Activated CD8-positive, alpha-beta T cell treated with anti-CD3 and anti-CD28 coated beads, Interleukin-2, amount 10 ng/mL, durations not matched to agents 7 days and 5 days (primary cell): ENCODE measurements at regions of chr9 and their contacts with region 1.

Region 1: GRCh38 chr9:128026773-128027541 is 40.2 kb downstream of the NAIF1 start:
- DNase-seq: peak; percentile 59
- ATAC-seq: peak; percentile 24
- H3K4me3 Mint-ChIP-seq: peak overlapping the region; percentile 71
- H3K27ac Mint-ChIP-seq: peak overlapping the region; percentile 96
- H3K4me1 Mint-ChIP-seq: peaks cover 93% of the 10 kb centered on the region
- H3K27me3 Mint-ChIP-seq: no peaks in the 10 kb centered on the region

Region 2: GRCh38 chr9:127611899-127612790 is 414.8 kb before region 1 on chr9 and contains the start of gene STXBP1:
- CTCF ChIA-PET with region 1: no interaction called
- POLR2A ChIA-PET with region 1: no interaction called
- DNase-seq: peak; percentile 89
- ATAC-seq: peak; percentile 82
- H3K4me3 Mint-ChIP-seq: peak within 1 kb of the TSS; percentile 84
- H3K27ac Mint-ChIP-seq: peak within 1 kb of the TSS; percentile 64
- H3K4me1 Mint-ChIP-seq: peaks cover 35% of the 10 kb centered on the region
- H3K27me3 Mint-ChIP-seq: peaks cover 34% of the 10 kb centered on the region
- total RNA-seq, gene STXBP1: 24.2 to 25.3 TPM

Region 3: GRCh38 chr9:127955294-127956035 is 71.5 kb before region 1 on chr9:
- CTCF ChIA-PET with region 1: interaction called, 151 read pairs
- POLR2A ChIA-PET with region 1: interaction called, 7 read pairs
- DNase-seq: peak; percentile 83
- ATAC-seq: peak; percentile 96
- H3K4me3 Mint-ChIP-seq: peak overlapping the region; percentile 21
- H3K27ac Mint-ChIP-seq: peak overlapping the region; percentile 70
- H3K4me1 Mint-ChIP-seq: peaks cover 89% of the 10 kb centered on the region
- H3K27me3 Mint-ChIP-seq: no peaks in the 10 kb centered on the region

Region 4: GRCh38 chr9:127970401-127971313 is 56.3 kb before region 1 on chr9:
- CTCF ChIA-PET with region 1: interaction called, 158 read pairs
- POLR2A ChIA-PET with region 1: interaction called, 183 read pairs
- DNase-seq: peak; percentile 86
- ATAC-seq: peak; percentile 74
- H3K4me3 Mint-ChIP-seq: peak overlapping the region; percentile 97
- H3K27ac Mint-ChIP-seq: peak overlapping the region; percentile 99
- H3K4me1 Mint-ChIP-seq: peaks cover 98% of the 10 kb centered on the region
- H3K27me3 Mint-ChIP-seq: no peaks in the 10 kb centered on the region

Region 5: DNA sequence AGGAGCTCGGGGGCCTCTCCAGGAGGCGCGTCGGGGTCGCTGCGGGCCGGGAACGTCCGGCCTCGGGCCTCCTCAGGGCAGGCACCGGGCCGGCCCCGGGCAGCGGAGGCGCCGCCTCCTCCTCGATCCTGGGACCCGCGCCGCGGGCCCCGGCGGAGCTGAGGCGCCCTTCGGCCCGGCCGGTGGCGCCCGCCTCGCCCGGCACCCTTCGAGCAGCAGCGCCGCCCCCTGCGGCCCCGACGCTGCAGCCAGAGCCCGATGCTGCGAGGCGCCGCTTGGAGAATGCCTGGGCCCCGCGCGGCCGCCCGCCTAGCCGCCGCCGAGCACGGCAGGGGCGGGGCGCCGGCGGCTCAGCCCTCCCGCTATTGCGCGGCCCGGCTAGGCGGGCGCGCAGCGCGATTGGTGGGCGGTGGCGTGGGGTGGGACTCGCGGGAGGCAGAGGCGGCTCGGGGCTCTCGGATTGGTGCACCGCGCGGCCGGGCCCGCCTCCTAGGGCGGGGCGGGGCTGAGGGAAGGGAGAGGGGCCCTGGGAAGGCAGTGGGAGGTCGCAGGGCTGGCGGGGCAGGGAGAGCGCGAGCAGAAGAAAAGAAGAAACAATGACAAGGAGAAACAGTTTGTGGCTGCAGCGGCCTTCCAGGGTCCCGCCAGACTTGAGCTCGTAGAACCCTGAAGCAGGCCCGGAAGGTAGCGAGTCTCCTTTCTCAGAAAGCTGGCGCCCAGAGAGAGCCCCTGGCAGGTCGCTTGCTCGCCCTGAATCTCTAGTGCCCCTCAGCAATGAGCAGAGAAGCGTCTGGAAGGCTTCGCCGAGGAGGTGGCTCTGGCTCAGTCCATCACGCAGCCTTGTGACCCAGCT is 46.0 kb before region 1 on chr9 and contains the start of gene EEIG1:
- CTCF ChIA-PET with region 1: interaction called, 158 read pairs
- POLR2A ChIA-PET with region 1: interaction called, 183 read pairs
- DNase-seq: peak; percentile 97
- ATAC-seq: peak; percentile 93
- H3K4me3 Mint-ChIP-seq: peak within 1 kb of the TSS; percentile 97
- H3K27ac Mint-ChIP-seq: peak within 1 kb of the TSS; percentile 92
- H3K4me1 Mint-ChIP-seq: peaks cover 45% of the 10 kb centered on the region
- H3K27me3 Mint-ChIP-seq: no peaks in the 10 kb centered on the region
- total RNA-seq, gene EEIG1: 227 to 232 TPM

Region 6: DNA sequence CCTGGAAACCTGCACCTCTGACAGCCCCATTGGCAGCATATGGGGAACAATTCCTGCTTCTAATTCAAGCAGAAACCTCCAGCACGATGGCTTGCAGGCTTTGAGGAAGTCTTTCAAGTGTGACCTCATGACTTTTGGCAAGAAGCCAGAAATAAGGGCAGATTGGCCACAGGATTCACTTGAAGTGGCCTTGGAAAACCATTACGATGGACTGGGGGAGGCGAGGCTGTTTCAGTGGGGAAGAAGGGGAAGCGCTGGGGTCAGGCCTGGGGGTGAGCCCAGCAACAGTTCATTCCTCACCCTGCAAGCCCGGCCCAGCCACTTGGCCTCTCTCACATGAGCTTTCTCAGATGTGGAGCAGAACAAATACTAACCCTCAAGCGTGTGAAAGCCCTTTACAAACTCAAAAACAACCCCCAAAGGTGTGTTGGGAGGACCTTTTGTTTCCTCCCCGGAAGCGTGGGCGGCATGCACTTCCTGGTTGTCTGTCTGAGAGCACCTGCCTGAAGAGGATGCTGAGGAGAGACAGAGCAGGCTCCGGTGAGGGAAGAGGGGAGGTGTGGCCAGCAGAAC is 19.3 kb before region 1 on chr9:
- CTCF ChIA-PET with region 1: interaction called, 25 read pairs
- POLR2A ChIA-PET with region 1: interaction called, 16 read pairs
- DNase-seq: peak; percentile 90
- ATAC-seq: peak; percentile 89
- H3K4me3 Mint-ChIP-seq: peak overlapping the region; percentile 61
- H3K27ac Mint-ChIP-seq: peak overlapping the region; percentile 90
- H3K4me1 Mint-ChIP-seq: peaks cover 53% of the 10 kb centered on the region
- H3K27me3 Mint-ChIP-seq: no peaks in the 10 kb centered on the region